ENCODE measurements at regions of chr20 and their contacts with region 1.

Region 1: DNA sequence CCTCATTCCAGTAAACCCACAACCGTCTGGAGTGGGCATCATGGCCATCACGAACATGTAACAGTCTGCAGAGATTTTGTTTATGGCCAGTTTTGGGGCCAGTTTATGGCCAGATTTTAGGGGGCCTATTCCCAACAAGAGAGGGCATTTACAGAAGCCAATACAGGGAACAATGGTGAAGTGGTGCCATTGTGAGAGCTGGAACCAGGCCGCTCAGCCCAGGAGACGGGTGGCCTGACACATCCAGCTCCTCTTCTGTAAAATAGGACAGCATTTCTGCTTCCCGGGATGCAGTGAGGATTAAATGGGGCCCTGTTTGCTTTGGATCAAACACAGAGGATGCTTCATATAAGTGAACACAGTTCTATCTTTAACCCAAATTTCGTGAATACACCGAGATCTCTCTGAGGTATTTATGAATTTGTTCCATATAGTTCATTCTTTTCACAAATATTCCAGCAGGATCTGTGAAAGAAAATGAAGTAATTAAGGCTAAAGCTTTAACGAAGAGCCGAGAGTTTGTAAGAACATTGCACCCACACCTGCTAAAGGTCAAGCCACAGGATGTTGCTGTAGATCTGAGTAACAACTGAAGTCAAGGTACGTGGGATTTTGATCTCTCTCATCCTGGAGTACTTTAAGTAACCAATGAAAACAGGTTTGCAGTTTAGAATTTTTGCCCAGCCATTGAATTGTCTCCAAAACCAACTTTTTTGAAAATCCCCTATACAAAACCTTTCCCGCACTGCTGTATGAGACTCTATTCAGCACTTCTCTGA is 14.5 kb upstream of the SIRPG start:
- DNase-seq: no peak
- H3K4me3 Mint-ChIP-seq: peak overlapping the region; percentile 60
- H3K27ac Mint-ChIP-seq: peak overlapping the region; percentile 94
- H3K4me1 Mint-ChIP-seq: peaks cover 84% of the 10 kb centered on the region
- H3K27me3 Mint-ChIP-seq: no peaks in the 10 kb centered on the region

Region 2: GRCh38 chr20:1619861-1620444 is 52.1 kb before region 1 on chr20 and contains the start of gene SIRPB1:
- intact Hi-C with region 1: loop called (anchors 2 kb)
- DNase-seq: no peak
- H3K4me3 Mint-ChIP-seq: no peak within 1 kb of the TSS
- H3K27ac Mint-ChIP-seq: no peak within 1 kb of the TSS
- H3K4me1 Mint-ChIP-seq: peaks cover 51% of the 10 kb centered on the region
- H3K27me3 Mint-ChIP-seq: no peaks in the 10 kb centered on the region
- total RNA-seq, gene SIRPB1: 0.67 and 1.6 TPM in 2 replicates

Region 3: GRCh38 chr20:1657556-1658334 is 14.3 kb before region 1 on chr20 and contains the start of gene SIRPG:
- intact Hi-C with region 1: loop called (anchors 1 kb)
- DNase-seq: no peak
- H3K4me3 Mint-ChIP-seq: peak within 1 kb of the TSS; percentile 83
- H3K27ac Mint-ChIP-seq: peak within 1 kb of the TSS; percentile 90
- H3K4me1 Mint-ChIP-seq: peaks cover 86% of the 10 kb centered on the region
- H3K27me3 Mint-ChIP-seq: no peaks in the 10 kb centered on the region
- total RNA-seq, gene SIRPG: 25.1 and 28.7 TPM in 2 replicates

Region 4: GRCh38 chr20:1685304-1686052 is 13.4 kb after region 1 on chr20:
- intact Hi-C with region 1: loop called (anchors 2 kb)
- DNase-seq: no peak
- H3K4me3 Mint-ChIP-seq: peak overlapping the region; percentile 69
- H3K27ac Mint-ChIP-seq: peak overlapping the region; percentile 66
- H3K4me1 Mint-ChIP-seq: peaks cover 50% of the 10 kb centered on the region
- H3K27me3 Mint-ChIP-seq: no peaks in the 10 kb centered on the region